ENCODE measurements at regions of chr5 and their contacts with region 1.

Region 1: DNA sequence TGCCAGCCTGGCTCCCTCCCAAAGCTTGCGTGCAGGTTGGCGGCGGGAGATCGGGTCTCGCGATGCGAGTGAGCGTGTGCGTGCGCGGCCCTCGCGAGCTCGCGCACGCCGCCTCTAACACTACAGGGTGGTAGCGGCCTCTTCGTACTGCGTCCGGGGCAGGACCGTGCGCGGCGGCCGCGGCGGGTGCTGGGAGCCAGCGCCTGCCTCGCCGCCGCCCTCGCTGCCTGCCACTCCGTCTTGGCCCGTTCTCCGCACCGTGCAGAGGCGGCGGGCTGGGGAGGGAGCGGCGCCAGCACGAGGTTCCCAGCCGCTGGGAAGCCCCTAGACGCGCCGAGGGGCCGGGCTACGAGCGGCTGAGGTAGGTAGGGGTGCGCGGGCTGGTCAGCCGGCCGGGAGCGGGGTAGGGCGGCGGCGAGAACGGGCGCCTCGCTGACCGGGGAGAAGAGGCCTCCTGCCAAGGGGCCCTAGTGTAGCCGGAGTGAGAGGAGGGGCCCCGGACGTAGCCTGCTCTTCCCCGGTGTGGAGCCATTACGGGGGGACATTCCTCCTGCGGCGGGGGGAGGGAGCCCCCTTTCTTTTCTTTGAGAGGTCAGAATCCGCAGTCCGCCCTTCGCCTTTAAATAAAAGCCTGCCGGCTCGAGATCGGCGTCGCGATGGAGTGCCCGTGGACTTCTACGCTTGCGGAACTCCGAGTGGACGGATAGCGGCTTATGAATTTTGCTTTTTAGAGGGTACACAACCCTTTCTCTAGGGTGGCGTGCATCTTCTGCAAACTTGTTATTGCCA is at the start of gene C5orf24:
- DNase-seq: peak; percentile 95
- H3K4me3 Mint-ChIP-seq: peak within 1 kb of the TSS; percentile 80
- H3K27ac Mint-ChIP-seq: peak within 1 kb of the TSS; percentile 93
- H3K4me1 Mint-ChIP-seq: peaks cover 34% of the 10 kb centered on the region
- H3K27me3 Mint-ChIP-seq: no peaks in the 10 kb centered on the region
- total RNA-seq, gene C5orf24: 32.3 to 32.5 TPM

Region 2: GRCh38 chr5:134738133-134738962 is 107.7 kb before region 1 on chr5 and contains the start of gene CAMLG:
- CTCF ChIA-PET with region 1: interaction called, 9 read pairs
- POLR2A ChIA-PET with region 1: interaction called, 16 read pairs
- DNase-seq: peak; percentile 98
- H3K4me3 Mint-ChIP-seq: peak within 1 kb of the TSS; percentile 92
- H3K27ac Mint-ChIP-seq: peak within 1 kb of the TSS; percentile 84
- H3K4me1 Mint-ChIP-seq: peaks cover 34% of the 10 kb centered on the region
- H3K27me3 Mint-ChIP-seq: no peaks in the 10 kb centered on the region
- total RNA-seq, gene CAMLG: 30.5 to 31.0 TPM

Region 3: DNA sequence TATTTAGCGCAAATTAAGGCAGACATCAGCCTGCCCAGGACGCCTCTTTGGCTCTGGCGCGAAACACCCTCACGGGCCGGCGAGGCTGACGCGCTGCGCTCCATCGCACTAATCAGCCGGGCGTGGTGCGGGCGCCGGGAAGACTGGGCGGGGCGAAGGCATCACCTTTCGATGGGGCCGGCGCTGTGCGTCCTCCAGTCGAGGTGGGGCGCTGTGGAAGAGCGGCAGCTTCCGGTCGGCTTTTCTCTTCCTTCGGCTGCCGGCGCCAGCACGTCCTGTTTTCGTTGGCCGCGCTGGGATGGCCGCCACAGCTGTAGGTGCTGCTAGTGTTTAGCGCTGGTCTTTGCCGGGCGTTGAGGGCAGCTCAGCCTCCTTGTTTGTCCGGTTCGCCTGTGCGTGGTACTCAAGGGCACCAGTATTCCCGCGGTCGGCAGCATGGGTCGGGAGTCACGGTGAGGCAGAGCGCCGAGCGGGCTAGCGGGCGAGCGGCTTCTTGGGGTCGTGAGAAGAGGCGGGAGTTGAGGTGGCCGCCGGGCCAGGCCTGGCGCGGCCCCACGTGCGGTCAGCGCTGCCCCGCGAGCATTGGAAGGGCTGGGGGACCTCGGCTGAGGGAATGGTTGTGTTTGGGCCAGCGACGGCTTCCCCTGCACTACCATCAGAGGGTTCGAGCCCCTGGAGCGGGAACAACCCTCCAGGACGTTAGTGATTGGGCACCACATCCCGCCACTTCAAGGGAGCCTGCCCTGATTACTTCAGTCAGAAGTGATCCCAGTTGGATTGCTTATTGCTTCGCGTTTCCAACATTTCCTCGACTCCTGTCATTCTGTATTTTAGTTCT is 87.3 kb before region 1 on chr5 and contains the start of gene DDX46:
- CTCF ChIA-PET with region 1: interaction called, 5 read pairs
- POLR2A ChIA-PET with region 1: interaction called, 16 read pairs
- DNase-seq: peak; percentile 95
- H3K4me3 Mint-ChIP-seq: peak within 1 kb of the TSS; percentile 95
- H3K27ac Mint-ChIP-seq: peak within 1 kb of the TSS; percentile 88
- H3K4me1 Mint-ChIP-seq: peaks cover 38% of the 10 kb centered on the region
- H3K27me3 Mint-ChIP-seq: no peaks in the 10 kb centered on the region
- total RNA-seq, gene DDX46: 51.8 to 56.7 TPM

Region 4: GRCh38 chr5:134817006-134817405 is 29.0 kb before region 1 on chr5:
- CTCF ChIA-PET with region 1: no interaction called
- POLR2A ChIA-PET with region 1: interaction called, 10 read pairs
- DNase-seq: no peak
- H3K4me3 Mint-ChIP-seq: no peak overlapping the region
- H3K27ac Mint-ChIP-seq: no peak overlapping the region
- H3K4me1 Mint-ChIP-seq: peaks cover 12% of the 10 kb centered on the region
- H3K27me3 Mint-ChIP-seq: no peaks in the 10 kb centered on the region

Region 5: GRCh38 chr5:134833340-134834032 is 12.6 kb before region 1 on chr5:
- CTCF ChIA-PET with region 1: interaction called, 4 read pairs
- POLR2A ChIA-PET with region 1: interaction called, 13 read pairs
- DNase-seq: no peak
- H3K4me3 Mint-ChIP-seq: no peak overlapping the region
- H3K27ac Mint-ChIP-seq: no peak overlapping the region
- H3K4me1 Mint-ChIP-seq: no peaks in the 10 kb centered on the region
- H3K27me3 Mint-ChIP-seq: no peaks in the 10 kb centered on the region

Region 6: DNA sequence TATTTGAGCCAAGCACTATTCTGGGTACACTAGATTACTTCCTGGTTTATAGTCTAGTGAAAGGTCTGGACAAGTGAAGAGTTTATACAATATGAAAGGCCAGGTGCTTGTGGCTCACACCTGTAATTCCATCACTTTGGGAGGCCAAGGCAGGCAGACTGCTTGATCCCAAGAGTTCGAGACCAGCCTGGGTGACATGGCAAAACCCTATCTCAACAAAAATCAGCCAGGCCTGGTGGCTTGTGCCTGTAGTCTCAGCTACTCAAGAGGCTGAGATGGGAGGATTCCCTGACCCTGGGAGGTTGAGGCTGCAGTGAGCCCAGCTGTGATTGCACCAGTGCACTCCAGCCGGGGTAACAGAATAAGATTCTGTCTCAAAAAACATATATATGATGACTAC is 18.7 kb after region 1 on chr5:
- CTCF ChIA-PET with region 1: interaction called, 4 read pairs
- POLR2A ChIA-PET with region 1: interaction called, 17 read pairs
- DNase-seq: no peak
- H3K4me3 Mint-ChIP-seq: no peak overlapping the region
- H3K27ac Mint-ChIP-seq: no peak overlapping the region
- H3K4me1 Mint-ChIP-seq: no peaks in the 10 kb centered on the region
- H3K27me3 Mint-ChIP-seq: no peaks in the 10 kb centered on the region

Region 7: GRCh38 chr5:134873987-134874830 is 28.2 kb after region 1 on chr5 and contains the start of gene TXNDC15:
- CTCF ChIA-PET with region 1: interaction called, 8 read pairs
- POLR2A ChIA-PET with region 1: interaction called, 25 read pairs
- DNase-seq: peak; percentile 86
- H3K4me3 Mint-ChIP-seq: peak within 1 kb of the TSS; percentile 95
- H3K27ac Mint-ChIP-seq: peak within 1 kb of the TSS; percentile 95
- H3K4me1 Mint-ChIP-seq: peaks cover 42% of the 10 kb centered on the region
- H3K27me3 Mint-ChIP-seq: no peaks in the 10 kb centered on the region
- total RNA-seq, gene TXNDC15: 51.0 to 56.9 TPM

Region 8: DNA sequence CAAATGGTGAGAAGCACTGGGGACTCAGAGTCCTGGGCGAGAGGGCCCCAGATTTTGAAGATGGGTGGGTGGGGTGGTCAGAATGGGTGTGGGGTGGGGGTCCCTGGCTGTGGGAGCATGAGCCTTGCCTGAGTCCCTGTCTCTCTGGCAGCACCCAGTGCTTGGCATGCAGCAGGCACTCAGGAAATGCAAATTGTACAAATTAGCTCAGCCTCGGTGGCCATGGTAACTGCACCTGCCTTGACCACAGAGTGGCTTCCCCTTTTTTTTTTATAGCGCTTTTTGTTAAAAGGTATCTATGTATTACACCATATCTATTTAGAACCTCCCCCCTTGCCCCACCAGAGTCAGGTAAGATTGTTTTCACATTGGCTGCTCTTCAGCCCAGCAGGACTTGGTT is 207.2 kb after region 1 on chr5:
- CTCF ChIA-PET with region 1: no interaction called
- POLR2A ChIA-PET with region 1: no interaction called
- DNase-seq: no peak
- H3K4me3 Mint-ChIP-seq: no peak overlapping the region
- H3K27ac Mint-ChIP-seq: no peak overlapping the region
- H3K4me1 Mint-ChIP-seq: no peaks in the 10 kb centered on the region
- H3K27me3 Mint-ChIP-seq: peaks cover 71% of the 10 kb centered on the region

Measured in activated CD4-positive, alpha-beta memory T cell treated with anti-CD3 and anti-CD28 coated beads, Interleukin-2, amount 10 ng/mL, durations not matched to agents 7 days and 5 days (primary cell).